ENCODE measurements at regions of chr4 and their contacts with region 1.

Region 1: GRCh38 chr4:143207557-143207956 is 22.8 kb downstream of the USP38 start:
- DNase-seq: peak; percentile 16
- H3K4me3 ChIP-seq: no peak overlapping the region
- H3K27ac ChIP-seq: no peak overlapping the region
- H3K4me1 ChIP-seq: no peaks in the 10 kb centered on the region
- H3K27me3 ChIP-seq: no peaks in the 10 kb centered on the region
- CTCF ChIP-seq: peak; percentile 21 to 52

Region 2: GRCh38 chr4:142331132-142331531 is 876.4 kb before region 1 on chr4:
- CTCF ChIA-PET with region 1: no interaction called
- dilution Hi-C with region 1: no loop called
- in situ Hi-C with region 1: no loop called
- intact Hi-C with region 1: no loop called
- DNase-seq: no peak
- H3K4me3 ChIP-seq: no peak overlapping the region
- H3K27ac ChIP-seq: no peak overlapping the region
- H3K4me1 ChIP-seq: peaks cover under 1% of the 10 kb centered on the region
- H3K27me3 ChIP-seq: no peaks in the 10 kb centered on the region
- CTCF ChIP-seq: no peak

Region 3: DNA sequence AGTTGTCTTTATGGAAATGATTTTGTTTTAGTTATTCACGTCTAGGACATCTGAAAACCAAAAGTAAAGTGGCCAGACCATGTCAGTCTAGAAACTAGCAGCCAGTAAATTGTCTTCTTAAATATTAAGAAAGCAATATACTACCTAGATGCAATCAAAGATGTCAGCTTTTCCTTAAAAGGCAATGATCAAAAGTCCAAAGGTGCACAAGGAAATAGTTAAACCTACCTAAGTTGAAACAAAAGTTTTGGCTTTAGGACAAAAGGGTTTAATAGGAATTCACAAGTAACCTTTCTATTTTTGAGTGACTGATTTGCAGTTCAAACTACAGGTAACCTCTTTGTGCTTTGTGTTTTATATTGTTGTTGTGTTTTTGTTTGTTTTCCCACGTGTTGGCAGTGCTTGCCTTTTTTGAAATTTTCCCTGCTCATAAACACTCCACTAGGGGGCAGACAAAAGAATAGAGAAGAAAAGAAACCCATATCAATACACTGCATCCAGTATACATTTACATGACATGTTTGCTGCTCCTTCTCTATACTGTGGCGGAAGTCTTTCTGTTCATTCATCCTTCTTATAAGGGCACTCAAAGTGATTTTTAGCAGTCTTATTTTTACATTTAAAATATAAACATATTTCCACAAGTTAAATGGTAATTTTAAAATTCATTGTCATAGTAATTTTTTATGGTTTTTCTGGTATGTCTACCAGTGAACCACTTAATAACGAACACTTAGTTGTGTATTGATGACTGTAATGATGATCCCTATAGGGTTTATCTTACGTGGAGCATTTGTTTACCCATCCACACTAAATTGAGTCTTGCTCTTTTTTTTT is 191.8 kb after region 1 on chr4:
- CTCF ChIA-PET with region 1: interaction called, 5 read pairs
- dilution Hi-C with region 1: no loop called
- in situ Hi-C with region 1: no loop called
- intact Hi-C with region 1: loop called (anchors 2 kb)
- DNase-seq: peak; percentile 17
- H3K4me3 ChIP-seq: no peak overlapping the region
- H3K27ac ChIP-seq: no peak overlapping the region
- H3K4me1 ChIP-seq: no peaks in the 10 kb centered on the region
- H3K27me3 ChIP-seq: no peaks in the 10 kb centered on the region
- CTCF ChIP-seq: peak; percentile 68 to 71

Region 4: GRCh38 chr4:143473334-143474126 is 266.0 kb after region 1 on chr4:
- CTCF ChIA-PET with region 1: no interaction called
- dilution Hi-C with region 1: no loop called
- in situ Hi-C with region 1: loop called (anchors 10 to 25 kb)
- intact Hi-C with region 1: no loop called
- DNase-seq: no peak
- H3K4me3 ChIP-seq: no peak overlapping the region
- H3K27ac ChIP-seq: no peak overlapping the region
- H3K4me1 ChIP-seq: no peaks in the 10 kb centered on the region
- H3K27me3 ChIP-seq: no peaks in the 10 kb centered on the region
- CTCF ChIP-seq: no peak